ENCODE measurements at regions of chr15 and their contacts with region 1.

Region 1: DNA sequence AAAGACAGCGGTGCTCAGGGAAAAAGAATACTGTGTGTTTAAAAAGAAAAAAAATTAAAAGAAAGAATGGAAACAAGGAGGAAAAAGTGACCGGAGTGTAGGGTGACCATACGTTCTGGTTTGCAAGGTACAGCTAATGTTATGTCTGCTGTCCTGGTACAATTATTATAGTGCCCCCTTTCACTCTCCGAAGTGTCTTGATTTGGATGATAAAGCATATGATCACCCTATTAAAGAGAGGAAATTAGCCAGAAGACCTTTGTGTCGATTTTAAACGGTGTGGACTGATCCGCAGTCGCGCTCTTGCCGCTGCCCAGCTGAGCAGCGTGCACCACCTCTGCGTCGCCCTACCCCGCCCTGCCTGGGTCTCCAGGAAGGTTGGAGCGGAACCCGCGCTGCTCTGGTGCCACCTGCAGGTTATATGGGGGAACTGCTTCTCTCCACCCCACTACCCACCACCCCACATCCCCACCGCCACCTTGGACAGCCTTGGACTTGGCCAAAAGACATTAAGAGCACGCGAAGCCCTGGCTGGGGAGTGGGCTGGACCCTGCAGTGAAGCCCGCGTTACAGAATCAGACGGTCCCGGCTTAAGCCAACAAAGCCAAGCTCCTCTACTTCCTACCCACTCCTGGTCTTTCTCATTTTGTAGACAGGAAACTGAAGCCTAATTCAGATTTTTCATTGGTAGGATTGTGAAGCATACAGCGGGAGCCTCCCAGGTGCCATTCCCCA is 41.2 kb upstream of the UBE2Q2 start:
- DNase-seq: peak; percentile 67 to 87 (median 74)
- ATAC-seq: peak; percentile 100
- H3K4me3 ChIP-seq: no peak overlapping the region
- H3K4me3 Mint-ChIP-seq: no peak overlapping the region
- H3K27ac ChIP-seq: no peak overlapping the region
- H3K27ac Mint-ChIP-seq: no peak overlapping the region
- H3K4me1 ChIP-seq: peaks cover 7% of the 10 kb centered on the region
- H3K4me1 Mint-ChIP-seq: peaks cover 4% of the 10 kb centered on the region
- H3K27me3 ChIP-seq: peaks cover 10 to 11% of the 10 kb centered on the region in 2 experiments
- H3K27me3 Mint-ChIP-seq: peaks cover 47% of the 10 kb centered on the region
- CTCF ChIP-seq: peak; percentile 81

Region 2: DNA sequence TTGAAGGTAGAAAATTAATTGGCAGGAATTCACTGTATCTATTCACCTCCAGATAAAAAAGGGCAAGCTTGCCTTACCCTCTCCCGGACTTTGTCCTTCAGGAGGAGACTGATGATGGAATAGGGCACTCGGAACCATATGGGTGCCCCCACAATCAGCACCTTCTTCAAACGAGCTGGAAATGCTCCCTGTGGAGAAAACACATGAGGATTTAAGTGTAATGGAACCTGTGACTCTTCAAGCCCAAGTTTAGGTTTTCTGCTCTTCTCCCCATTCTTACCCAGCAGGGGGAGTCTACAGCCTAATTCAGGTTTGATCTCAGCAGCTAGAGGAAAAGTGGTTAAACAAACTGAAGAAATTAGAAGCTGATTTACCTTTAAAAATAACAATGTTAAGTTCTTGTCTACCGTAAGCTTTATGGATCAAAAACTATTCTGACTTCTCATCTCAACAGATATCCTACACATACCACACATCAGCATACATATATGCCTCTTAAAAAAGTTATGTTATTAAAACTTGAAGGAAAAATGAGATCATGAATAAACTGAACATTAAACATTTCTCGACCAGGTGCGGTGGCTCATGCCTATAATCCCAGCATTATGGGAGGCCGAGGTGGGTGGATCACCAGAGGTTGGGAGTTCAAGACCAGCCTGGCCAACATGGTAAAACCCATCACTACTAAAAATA is 293.0 kb before region 1 on chr15:
- CTCF ChIA-PET with region 1: no interaction called
- POLR2A ChIA-PET with region 1: no interaction called
- intact Hi-C with region 1: loop called (anchors 1 to 5 kb)
- DNase-seq: peak in 6 of 14 experiments; percentile 15 to 64 (median 48)
- ATAC-seq: peak; percentile 34
- H3K4me3 ChIP-seq: no peak overlapping the region
- H3K4me3 Mint-ChIP-seq: no peak overlapping the region
- H3K27ac ChIP-seq: no peak overlapping the region
- H3K27ac Mint-ChIP-seq: peak overlapping the region; percentile 13
- H3K4me1 ChIP-seq: no peaks in the 10 kb centered on the region
- H3K4me1 Mint-ChIP-seq: no peaks in the 10 kb centered on the region
- H3K27me3 ChIP-seq: no peaks in the 10 kb centered on the region
- H3K27me3 Mint-ChIP-seq: no peaks in the 10 kb centered on the region
- CTCF ChIP-seq: peak; percentile 60

Region 3: GRCh38 chr15:75696311-75696720 is 105.7 kb before region 1 on chr15:
- CTCF ChIA-PET with region 1: no interaction called
- POLR2A ChIA-PET with region 1: no interaction called
- intact Hi-C with region 1: no loop called
- DNase-seq: no peak
- ATAC-seq: no peak
- H3K4me3 ChIP-seq: no peak overlapping the region
- H3K4me3 Mint-ChIP-seq: no peak overlapping the region
- H3K27ac ChIP-seq: no peak overlapping the region
- H3K27ac Mint-ChIP-seq: no peak overlapping the region
- H3K4me1 ChIP-seq: peaks cover 9% of the 10 kb centered on the region
- H3K4me1 Mint-ChIP-seq: peaks cover 7% of the 10 kb centered on the region
- H3K27me3 ChIP-seq: peaks cover 4% of the 10 kb centered on the region in 2 experiments
- H3K27me3 Mint-ChIP-seq: peaks cover 21% of the 10 kb centered on the region
- CTCF ChIP-seq: no peak

Region 4: GRCh38 chr15:75785771-75786574 is 16.1 kb before region 1 on chr15:
- CTCF ChIA-PET with region 1: no interaction called
- POLR2A ChIA-PET with region 1: no interaction called
- intact Hi-C with region 1: no loop called
- DNase-seq: peak in 1 of 14 experiments; percentile 8
- ATAC-seq: no peak
- H3K4me3 ChIP-seq: no peak overlapping the region
- H3K4me3 Mint-ChIP-seq: no peak overlapping the region
- H3K27ac ChIP-seq: no peak overlapping the region
- H3K27ac Mint-ChIP-seq: no peak overlapping the region
- H3K4me1 ChIP-seq: no peaks in the 10 kb centered on the region
- H3K4me1 Mint-ChIP-seq: no peaks in the 10 kb centered on the region
- H3K27me3 ChIP-seq: peaks cover 0 to 4% of the 10 kb centered on the region in 2 experiments
- H3K27me3 Mint-ChIP-seq: no peaks in the 10 kb centered on the region
- CTCF ChIP-seq: no peak